Head of caudate nucleus (tissue), 42 donors: ENCODE measurements at regions of chr2 and their contacts with region 1.

Region 1: GRCh38 chr2:63497576-63497975 is 90.7 kb downstream of the WDPCP start:
- DNase-seq: no peak

Region 2: DNA sequence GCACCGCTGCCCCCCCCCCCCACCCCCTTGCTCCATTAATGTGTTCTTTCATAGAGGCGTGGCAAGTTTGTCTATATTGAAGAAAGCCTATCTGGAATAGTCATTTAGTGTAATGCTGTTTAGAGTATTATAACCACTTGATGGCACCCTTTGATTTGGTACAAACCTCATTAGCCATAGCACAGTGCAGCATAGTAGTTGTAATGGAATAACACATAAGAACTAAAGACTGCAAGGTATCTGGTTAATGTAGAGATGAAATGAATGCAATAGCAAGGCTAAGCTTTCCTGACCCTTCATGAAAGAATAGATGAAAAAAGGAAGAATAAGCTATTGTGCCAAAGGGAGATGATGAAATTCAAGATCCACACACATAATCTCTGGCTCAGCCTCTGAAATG is 710.2 kb before region 1 on chr2:
- intact Hi-C with region 1: loop called (anchors 10 kb)
- DNase-seq: peak in 3 of 42 donors; percentile 12 to 45 (median 17)

Region 3: GRCh38 chr2:62895632-62896009 is 602.0 kb before region 1 on chr2:
- intact Hi-C with region 1: no loop called
- DNase-seq: no peak

Region 4: GRCh38 chr2:63790913-63791312 is 293.3 kb after region 1 on chr2:
- intact Hi-C with region 1: no loop called
- DNase-seq: no peak